ENCODE measurements at regions of chr4 and their contacts with region 1.

Region 1: GRCh38 chr4:52721968-52722815 is 29.0 kb downstream of the ERVMER34-1 start:
- DNase-seq: peak; percentile 92
- ATAC-seq: peak; percentile 98
- H3K4me3 ChIP-seq: peak overlapping the region; percentile 76
- H3K27ac ChIP-seq: peak overlapping the region; percentile 83
- H3K4me1 ChIP-seq: no peaks in the 10 kb centered on the region
- H3K27me3 ChIP-seq: no peaks in the 10 kb centered on the region
- CTCF ChIP-seq: no peak
- EP300 ChIP-seq: 0 out of 4 replicates have a peak, but pooled peaks of 1 of the 2 experiments have one; percentile 30
- POLR2A ChIP-seq: peak; percentile 95
- RAD21 ChIP-seq: no peak

Region 2: DNA sequence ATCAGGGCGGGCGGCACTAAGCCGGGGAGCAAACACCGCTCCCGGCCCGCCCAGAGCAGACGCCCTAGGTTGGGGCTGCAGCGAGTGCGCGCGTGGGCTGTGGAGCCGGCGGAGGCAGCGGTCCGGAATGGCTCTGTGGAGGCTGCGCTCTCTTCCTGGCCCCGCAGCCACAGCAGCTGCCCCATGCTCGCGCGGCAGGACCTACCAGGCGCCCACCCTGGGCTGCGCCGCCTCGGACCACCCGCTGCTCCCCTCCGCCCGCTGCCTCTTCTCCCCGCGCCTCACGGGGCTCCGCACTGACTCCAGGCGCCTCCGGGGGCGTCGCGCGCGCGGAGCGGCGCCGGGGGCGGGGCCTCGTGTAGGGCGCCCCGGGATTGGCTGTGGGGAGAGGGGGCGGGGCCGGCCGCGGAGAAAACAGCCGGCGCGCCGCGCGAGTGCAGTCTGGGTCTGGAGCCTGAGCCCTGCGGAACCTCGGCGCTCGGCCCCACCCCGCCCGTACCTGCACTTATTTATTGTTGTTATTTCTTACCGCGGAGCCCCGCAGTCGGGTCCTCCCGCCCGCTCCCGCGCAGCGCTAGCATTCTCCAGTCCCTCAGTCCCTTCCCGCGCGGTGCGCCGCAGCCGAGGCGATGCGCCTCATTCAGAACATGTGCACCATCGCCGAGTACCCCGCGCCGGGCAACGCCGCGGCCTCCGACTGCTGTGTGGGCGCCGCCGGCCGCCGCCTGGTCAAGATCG is 139.9 kb after region 1 on chr4 and contains the start of gene RASL11B:
- CTCF ChIA-PET with region 1: no interaction called
- POLR2A ChIA-PET with region 1: no interaction called
- RAD21 ChIA-PET with region 1: no interaction called
- SMC1A ChIA-PET with region 1: no interaction called
- in situ Hi-C with region 1: no loop called
- intact Hi-C with region 1: loop called (anchors 5 kb)
- DNase-seq: peak; percentile 4
- ATAC-seq: peak; percentile 100
- H3K4me3 ChIP-seq: peak within 1 kb of the TSS; percentile 72; the same call in 1 of the 2 replicates
- H3K27ac ChIP-seq: no peak within 1 kb of the TSS
- H3K4me1 ChIP-seq: peaks cover 4% of the 10 kb centered on the region
- H3K27me3 ChIP-seq: peaks cover 0 to 5% of the 10 kb centered on the region in 2 experiments; a peak in 2 of 4 replicates
- CTCF ChIP-seq: peak in 2 of 3 experiments; percentile 7 to 28; a peak in 2 of 6 replicates
- EP300 ChIP-seq: no peak
- POLR2A ChIP-seq: peak; percentile 76
- RAD21 ChIP-seq: no peak
- polyA plus RNA-seq, gene RASL11B: 0.08 TPM in 1 of 2 experiments, not detected in the other